ENCODE measurements at regions of chr4 and their contacts with region 1.

Region 1: GRCh38 chr4:82900331-82901128 is at the start of gene THAP9:
- DNase-seq: peak; percentile 91 to 100 (median 99)
- ATAC-seq: peak; percentile 88 to 93 (median 92)
- H3K4me3 ChIP-seq: peak within 1 kb of the TSS; percentile 77 to 85
- H3K4me3 Mint-ChIP-seq: no peak within 1 kb of the TSS
- H3K27ac ChIP-seq: peak within 1 kb of the TSS; percentile 91
- H3K27ac Mint-ChIP-seq: no peak within 1 kb of the TSS
- H3K4me1 ChIP-seq: peaks cover 3 to 24% of the 10 kb centered on the region in 2 experiments
- H3K4me1 Mint-ChIP-seq: peaks cover 15 to 22% (median 21%) of the 10 kb centered on the region in 3 donors
- H3K27me3 ChIP-seq: no peaks in the 10 kb centered on the region
- H3K27me3 Mint-ChIP-seq: no peaks in the 10 kb centered on the region
- total RNA-seq, gene THAP9: 2.3 to 4.1 (median 3.0) TPM

Region 2: DNA sequence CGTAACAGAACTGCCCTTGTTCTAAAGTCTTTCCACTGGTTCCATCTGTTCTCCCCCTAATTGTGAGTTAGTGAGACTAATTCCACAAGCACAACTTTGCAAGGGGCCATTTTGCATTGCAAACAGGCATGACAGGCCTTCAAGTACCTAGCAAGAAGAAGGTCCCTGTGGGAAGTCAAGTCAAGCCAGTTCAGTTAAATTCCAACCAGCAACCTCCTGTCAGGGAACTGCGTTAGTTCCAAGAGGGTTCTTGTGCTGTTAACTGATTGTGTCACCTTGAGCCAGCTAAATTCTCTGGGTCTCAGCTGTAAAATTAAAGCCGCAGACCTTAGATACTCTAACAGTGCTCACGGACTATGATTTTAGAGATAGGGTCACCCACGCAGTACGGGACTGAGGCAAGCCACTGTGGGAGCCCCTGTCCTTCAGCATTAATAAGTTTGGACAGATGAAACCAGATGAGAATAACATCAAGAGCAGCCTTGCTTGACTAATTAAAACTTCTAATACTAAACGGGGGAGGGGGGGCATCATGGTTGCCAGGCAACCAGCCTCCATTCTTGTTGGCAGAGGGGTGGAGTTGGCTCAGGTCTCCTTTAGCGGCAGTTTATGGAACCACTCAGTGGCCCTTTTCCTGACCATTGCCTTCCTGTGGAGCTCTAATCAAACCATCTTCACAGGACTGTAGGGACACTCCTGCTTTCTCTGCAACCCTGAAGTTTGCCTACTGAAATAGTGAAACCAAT is 314.7 kb before region 1 on chr4:
- CTCF ChIA-PET with region 1: no interaction called
- POLR2A ChIA-PET with region 1: no interaction called
- DNase-seq: no peak
- ATAC-seq: no peak
- H3K4me3 ChIP-seq: no peak overlapping the region
- H3K4me3 Mint-ChIP-seq: no peak overlapping the region
- H3K27ac ChIP-seq: no peak overlapping the region
- H3K27ac Mint-ChIP-seq: no peak overlapping the region
- H3K4me1 ChIP-seq: no peaks in the 10 kb centered on the region
- H3K4me1 Mint-ChIP-seq: no peaks in the 10 kb centered on the region
- H3K27me3 ChIP-seq: peaks cover 0 to 4% of the 10 kb centered on the region in 2 experiments
- H3K27me3 Mint-ChIP-seq: peaks cover 0 to 3% of the 10 kb centered on the region in 2 donors

Region 3: DNA sequence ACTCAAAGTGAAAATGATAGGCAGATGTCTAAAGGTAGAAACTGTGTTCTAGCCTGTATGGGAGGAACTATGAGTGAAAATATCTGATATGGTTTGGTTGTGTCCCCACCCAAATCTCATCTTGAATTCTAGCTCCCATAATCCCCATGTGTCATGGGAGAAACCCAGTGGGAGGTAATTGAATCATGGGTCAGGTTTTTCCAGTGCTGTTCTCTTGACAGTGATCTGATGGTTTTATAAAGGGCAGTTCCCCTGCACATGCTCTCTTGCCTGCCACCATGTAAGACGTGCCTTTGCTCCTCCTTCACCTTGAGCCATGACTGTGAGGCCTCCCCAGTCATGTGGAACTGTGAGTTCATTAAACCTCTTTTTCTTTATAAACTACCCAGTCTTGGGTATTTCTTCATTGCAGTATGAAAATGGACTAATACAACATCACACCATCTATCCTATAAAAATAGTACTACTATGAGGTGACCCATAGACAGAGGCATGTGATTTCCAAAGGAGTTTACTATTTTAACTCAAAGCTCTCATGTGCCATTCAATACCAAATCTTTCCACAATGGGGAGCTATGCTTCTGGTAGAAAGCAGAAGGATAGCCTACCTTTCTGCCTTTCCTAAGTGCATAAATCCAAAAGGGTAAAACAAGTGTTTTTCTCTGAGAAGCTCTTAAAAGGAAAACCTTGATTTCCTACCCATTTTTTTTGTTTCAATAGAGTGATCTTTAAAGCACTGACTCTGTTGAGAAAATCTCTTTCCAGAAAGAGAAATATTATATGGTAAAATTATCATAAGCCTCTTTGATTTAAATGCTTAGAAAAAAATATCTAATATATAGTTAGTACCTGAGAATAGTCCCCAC is 48.4 kb before region 1 on chr4:
- CTCF ChIA-PET with region 1: interaction called, 3 to 12 read pairs
- POLR2A ChIA-PET with region 1: interaction called in 1 of 2 experiments, 8 read pairs
- DNase-seq: peak in 1 of 35 experiments; percentile 59
- ATAC-seq: no peak
- H3K4me3 ChIP-seq: no peak overlapping the region
- H3K4me3 Mint-ChIP-seq: no peak overlapping the region
- H3K27ac ChIP-seq: no peak overlapping the region
- H3K27ac Mint-ChIP-seq: peak overlapping the region; percentile 17 to 45
- H3K4me1 ChIP-seq: no peaks in the 10 kb centered on the region
- H3K4me1 Mint-ChIP-seq: peaks cover 0 to 4% (median 2%) of the 10 kb centered on the region in 3 donors
- H3K27me3 ChIP-seq: no peaks in the 10 kb centered on the region
- H3K27me3 Mint-ChIP-seq: no peaks in the 10 kb centered on the region

Region 4: GRCh38 chr4:82889287-82889686 is 11.2 kb before region 1 on chr4:
- CTCF ChIA-PET with region 1: interaction called in 1 of 2 experiments, 23 read pairs
- POLR2A ChIA-PET with region 1: interaction called in 1 of 2 experiments, 4 read pairs
- DNase-seq: no peak
- ATAC-seq: no peak
- H3K4me3 ChIP-seq: no peak overlapping the region
- H3K4me3 Mint-ChIP-seq: peak overlapping the region; percentile 88 to 94 (median 90)
- H3K27ac ChIP-seq: no peak overlapping the region
- H3K27ac Mint-ChIP-seq: peak overlapping the region; percentile 44 to 96
- H3K4me1 ChIP-seq: peaks cover 14 to 23% of the 10 kb centered on the region in 2 experiments
- H3K4me1 Mint-ChIP-seq: peaks cover 57 to 65% (median 57%) of the 10 kb centered on the region in 3 donors
- H3K27me3 ChIP-seq: no peaks in the 10 kb centered on the region
- H3K27me3 Mint-ChIP-seq: no peaks in the 10 kb centered on the region

Region 5: DNA sequence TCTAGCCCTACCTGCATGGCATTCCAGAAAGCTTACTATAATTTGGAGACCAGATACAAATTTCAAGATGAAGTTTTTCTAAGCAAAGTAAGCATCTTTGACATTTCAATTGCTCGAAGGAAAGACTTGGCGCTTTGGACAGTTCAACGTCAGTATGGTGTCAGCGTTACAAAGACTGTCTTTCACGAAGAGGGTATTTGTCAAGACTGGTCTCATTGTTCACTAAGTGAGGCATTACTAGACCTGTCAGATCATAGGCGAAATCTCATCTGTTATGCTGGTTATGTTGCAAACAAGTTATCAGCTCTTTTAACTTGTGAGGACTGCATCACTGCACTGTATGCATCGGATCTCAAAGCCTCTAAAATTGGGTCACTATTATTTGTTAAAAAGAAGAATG is 17.6 kb after region 1 on chr4:
- CTCF ChIA-PET with region 1: no interaction called
- POLR2A ChIA-PET with region 1: no interaction called
- DNase-seq: no peak
- ATAC-seq: no peak
- H3K4me3 ChIP-seq: no peak overlapping the region
- H3K4me3 Mint-ChIP-seq: no peak overlapping the region
- H3K27ac ChIP-seq: no peak overlapping the region
- H3K27ac Mint-ChIP-seq: no peak overlapping the region
- H3K4me1 ChIP-seq: no peaks in the 10 kb centered on the region
- H3K4me1 Mint-ChIP-seq: no peaks in the 10 kb centered on the region
- H3K27me3 ChIP-seq: no peaks in the 10 kb centered on the region
- H3K27me3 Mint-ChIP-seq: no peaks in the 10 kb centered on the region

Region 6: GRCh38 chr4:82984459-82984858 is 83.9 kb after region 1 on chr4:
- CTCF ChIA-PET with region 1: no interaction called
- POLR2A ChIA-PET with region 1: no interaction called
- DNase-seq: no peak
- ATAC-seq: no peak
- H3K4me3 ChIP-seq: no peak overlapping the region
- H3K4me3 Mint-ChIP-seq: no peak overlapping the region
- H3K27ac ChIP-seq: no peak overlapping the region
- H3K27ac Mint-ChIP-seq: no peak overlapping the region
- H3K4me1 ChIP-seq: peaks cover 3% of the 10 kb centered on the region in 2 experiments
- H3K4me1 Mint-ChIP-seq: peaks cover 5 to 21% (median 15%) of the 10 kb centered on the region in 3 donors
- H3K27me3 ChIP-seq: no peaks in the 10 kb centered on the region
- H3K27me3 Mint-ChIP-seq: no peaks in the 10 kb centered on the region

Region 7: GRCh38 chr4:83012687-83013419 is 112.3 kb after region 1 on chr4:
- CTCF ChIA-PET with region 1: interaction called, 8 to 17 read pairs
- POLR2A ChIA-PET with region 1: interaction called in 1 of 2 experiments, 20 read pairs
- DNase-seq: peak; percentile 90 to 98 (median 95)
- ATAC-seq: peak; percentile 84 to 90 (median 88)
- H3K4me3 ChIP-seq: peak overlapping the region; percentile 77 to 79
- H3K4me3 Mint-ChIP-seq: peak overlapping the region; percentile 90 to 99 (median 91)
- H3K27ac ChIP-seq: peak overlapping the region; percentile 57
- H3K27ac Mint-ChIP-seq: peak overlapping the region; percentile 92 to 97
- H3K4me1 ChIP-seq: peaks cover 20 to 26% of the 10 kb centered on the region in 2 experiments
- H3K4me1 Mint-ChIP-seq: peaks cover 38 to 54% (median 49%) of the 10 kb centered on the region in 3 donors
- H3K27me3 ChIP-seq: no peaks in the 10 kb centered on the region
- H3K27me3 Mint-ChIP-seq: no peaks in the 10 kb centered on the region

Region 8: DNA sequence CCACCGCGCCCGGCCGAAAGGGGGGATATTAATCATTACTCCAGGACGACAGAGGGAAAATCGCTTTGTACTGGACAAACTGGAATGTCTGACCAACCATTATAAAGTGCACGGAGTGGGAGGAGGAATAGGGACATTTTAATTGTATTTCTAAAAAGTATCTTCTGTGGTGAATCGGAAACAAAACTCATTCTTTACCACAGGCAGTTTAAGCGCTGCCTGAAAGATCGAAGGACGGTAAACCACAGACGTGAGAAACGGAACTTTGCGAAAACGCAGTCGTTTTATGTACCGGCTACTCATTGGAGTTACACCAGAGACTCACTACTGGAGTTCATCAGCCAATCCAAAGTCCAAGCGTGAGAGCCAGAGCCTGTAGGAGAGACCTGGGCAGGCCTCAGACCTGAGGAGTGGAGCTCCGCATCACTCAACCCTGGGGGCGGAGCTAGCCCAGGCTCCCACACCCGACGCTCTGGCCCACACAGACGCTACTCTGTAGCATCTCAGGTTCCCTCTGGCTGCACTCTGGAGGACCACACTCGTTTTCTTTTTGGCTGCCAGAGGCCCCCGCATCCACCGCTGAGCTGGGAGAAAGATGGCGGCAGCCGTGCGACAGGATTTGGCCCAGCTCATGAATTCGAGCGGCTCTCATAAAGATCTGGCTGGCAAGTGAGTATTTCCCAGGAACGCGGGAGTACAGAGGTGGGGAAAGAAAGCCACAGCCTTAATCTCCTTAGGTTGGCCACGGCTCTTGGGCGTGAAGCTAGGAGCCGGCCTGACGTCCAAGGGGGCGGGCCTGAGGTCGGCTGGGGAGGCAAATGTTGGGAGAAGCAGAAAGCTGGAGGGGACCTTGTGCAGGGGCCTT is 134.3 kb after region 1 on chr4 and contains the start of gene COPS4:
- CTCF ChIA-PET with region 1: interaction called in 1 of 2 experiments, 14 read pairs
- POLR2A ChIA-PET with region 1: interaction called in 1 of 2 experiments, 12 read pairs
- DNase-seq: peak; percentile 80 to 99 (median 95)
- ATAC-seq: peak; percentile 96 to 99 (median 96)
- H3K4me3 ChIP-seq: peak within 1 kb of the TSS; percentile 73 to 92
- H3K4me3 Mint-ChIP-seq: peak within 1 kb of the TSS; percentile 94 to 99 (median 97)
- H3K27ac ChIP-seq: peak within 1 kb of the TSS; percentile 77
- H3K27ac Mint-ChIP-seq: peak within 1 kb of the TSS; percentile 96 to 99
- H3K4me1 ChIP-seq: peaks cover 10 to 13% of the 10 kb centered on the region in 2 experiments
- H3K4me1 Mint-ChIP-seq: peaks cover 40 to 41% (median 40%) of the 10 kb centered on the region in 3 donors
- H3K27me3 ChIP-seq: no peaks in the 10 kb centered on the region
- H3K27me3 Mint-ChIP-seq: no peaks in the 10 kb centered on the region
- total RNA-seq, gene COPS4: 19.9 to 28.3 (median 22.2) TPM

Region 9: DNA sequence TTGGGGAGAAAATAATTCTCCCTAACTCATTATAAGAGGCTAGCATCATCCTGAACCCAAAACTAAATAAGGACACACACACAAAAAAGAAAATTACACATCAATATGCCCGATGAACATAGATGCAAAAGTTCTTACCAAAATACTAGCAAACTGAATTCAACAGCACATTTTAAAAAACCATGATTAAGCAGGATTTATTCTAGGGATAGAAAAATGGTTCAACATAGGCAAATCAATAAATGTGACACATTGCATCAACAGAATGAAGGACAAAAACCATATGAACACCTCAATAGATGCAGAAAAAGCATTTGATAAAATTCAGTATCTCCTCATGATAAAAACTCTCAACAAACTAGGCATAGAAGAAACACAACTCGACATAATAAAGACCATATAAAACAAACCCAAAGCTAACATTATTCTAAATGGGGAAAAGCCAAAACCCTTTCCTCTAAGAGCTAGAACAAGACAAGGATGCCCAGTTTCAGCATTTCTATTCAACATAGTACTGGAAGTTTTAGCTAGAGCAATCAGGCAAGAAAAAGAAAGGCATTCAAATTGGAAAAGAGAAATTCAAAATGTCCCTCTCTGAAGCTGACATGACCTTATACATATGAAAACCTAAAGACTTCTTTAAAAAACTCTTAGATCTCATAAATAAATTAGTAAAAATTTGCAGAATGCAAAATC is 1397.6 kb after region 1 on chr4:
- CTCF ChIA-PET with region 1: no interaction called
- POLR2A ChIA-PET with region 1: no interaction called
- DNase-seq: no peak
- ATAC-seq: no peak
- H3K4me3 ChIP-seq: no peak overlapping the region
- H3K4me3 Mint-ChIP-seq: no peak overlapping the region
- H3K27ac ChIP-seq: no peak overlapping the region
- H3K27ac Mint-ChIP-seq: no peak overlapping the region
- H3K4me1 ChIP-seq: no peaks in the 10 kb centered on the region
- H3K4me1 Mint-ChIP-seq: no peaks in the 10 kb centered on the region
- H3K27me3 ChIP-seq: no peaks in the 10 kb centered on the region
- H3K27me3 Mint-ChIP-seq: no peaks in the 10 kb centered on the region